Psoas muscle (tissue), 8 donors: ENCODE measurements at regions of chr1 and their contacts with region 1.

Region 1: GRCh38 chr1:7902478-7903085 is 38.1 kb downstream of the TNFRSF9 start:
- DNase-seq: peak; percentile 50 to 65
- ATAC-seq: peak; percentile 64 to 91 (median 82)
- H3K4me3 ChIP-seq: peak overlapping the region; percentile 50
- H3K27ac ChIP-seq: no peak overlapping the region
- H3K4me1 ChIP-seq: no peaks in the 10 kb centered on the region
- H3K27me3 ChIP-seq: no peaks in the 10 kb centered on the region
- CTCF ChIP-seq: peak; percentile 67

Region 2: DNA sequence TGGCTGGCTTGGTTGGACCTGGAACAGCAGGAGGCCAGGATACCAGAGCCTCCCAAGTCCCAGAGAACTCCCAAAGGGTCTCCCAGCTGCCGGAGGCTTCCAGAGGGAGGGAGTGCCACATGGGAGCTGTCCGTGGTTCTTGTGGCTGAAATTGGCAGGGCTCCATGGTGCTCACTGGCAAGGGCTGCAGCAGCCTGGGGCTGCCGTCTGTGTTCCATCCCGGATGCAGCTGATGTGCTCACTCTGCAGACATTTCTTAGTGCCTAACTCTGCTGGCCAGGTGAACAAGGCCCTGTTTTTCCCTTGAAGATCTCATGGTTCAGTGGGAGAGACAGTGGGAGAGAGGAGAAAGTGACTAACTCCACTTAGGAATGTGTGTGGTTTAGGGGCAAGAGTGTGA is 856.3 kb before region 1 on chr1:
- intact Hi-C with region 1: no loop called
- DNase-seq: no peak
- ATAC-seq: no peak
- H3K4me3 ChIP-seq: no peak overlapping the region
- H3K27ac ChIP-seq: no peak overlapping the region
- H3K4me1 ChIP-seq: peaks cover 7% of the 10 kb centered on the region
- H3K27me3 ChIP-seq: peaks cover 0 to 14% (median 0%) of the 10 kb centered on the region in 3 donors
- CTCF ChIP-seq: no peak

Region 3: GRCh38 chr1:7667625-7668218 is 234.9 kb before region 1 on chr1:
- intact Hi-C with region 1: loop called (anchors 5 to 10 kb)
- DNase-seq: peak; percentile 91 to 93
- ATAC-seq: peak; percentile 85 to 95 (median 91)
- H3K4me3 ChIP-seq: no peak overlapping the region
- H3K27ac ChIP-seq: no peak overlapping the region
- H3K4me1 ChIP-seq: no peaks in the 10 kb centered on the region
- H3K27me3 ChIP-seq: no peaks in the 10 kb centered on the region
- CTCF ChIP-seq: peak; percentile 100

Region 4: DNA sequence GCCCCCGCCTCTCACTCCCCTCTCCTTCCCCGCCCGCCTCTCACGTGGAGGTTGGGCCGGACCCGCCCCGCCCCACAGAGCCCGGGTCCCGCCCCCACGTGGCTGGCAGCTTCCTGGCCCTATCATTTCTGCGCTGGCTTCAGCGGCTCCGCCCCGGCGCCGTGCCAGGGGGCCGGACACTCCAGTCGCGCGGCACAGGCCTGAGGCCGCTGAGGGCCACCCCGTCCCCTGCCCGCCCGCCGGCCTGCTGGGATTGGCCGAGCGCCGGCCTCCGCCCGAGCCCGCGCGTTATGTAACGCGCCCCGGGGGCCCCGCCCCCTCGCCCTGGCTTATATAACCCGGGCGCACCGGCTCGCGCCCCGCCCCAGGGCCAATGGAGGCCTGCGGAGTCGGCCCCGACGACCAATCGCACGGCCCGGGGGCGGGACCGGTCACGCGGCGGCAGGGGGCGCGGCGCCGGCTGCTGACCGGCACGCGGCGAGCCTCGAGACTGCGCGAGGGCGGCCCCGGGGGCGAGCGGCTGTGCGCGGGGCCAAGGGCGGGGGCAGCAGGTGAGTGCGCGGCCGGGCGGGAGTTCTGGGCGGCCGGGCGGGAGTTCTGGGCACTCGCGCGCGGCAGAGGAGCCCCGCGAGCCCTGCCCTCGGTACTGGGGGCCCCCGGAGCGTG is 118.6 kb before region 1 on chr1 and contains the start of gene PER3:
- intact Hi-C with region 1: loop called in 1 of 2 experiments (anchors 10 kb)
- DNase-seq: peak; percentile 99
- ATAC-seq: peak; percentile 93 to 97 (median 94)
- H3K4me3 ChIP-seq: peak within 1 kb of the TSS; percentile 89
- H3K27ac ChIP-seq: peak within 1 kb of the TSS; percentile 96
- H3K4me1 ChIP-seq: peaks cover 17% of the 10 kb centered on the region
- H3K27me3 ChIP-seq: no peaks in the 10 kb centered on the region
- CTCF ChIP-seq: no peak
- total RNA-seq, gene PER3: 4.8 to 15.1 (median 10.5) TPM